Gastrocnemius medialis (tissue), 4 donors: ENCODE measurements at regions of chr7 and their contacts with region 1.

Region 1: DNA sequence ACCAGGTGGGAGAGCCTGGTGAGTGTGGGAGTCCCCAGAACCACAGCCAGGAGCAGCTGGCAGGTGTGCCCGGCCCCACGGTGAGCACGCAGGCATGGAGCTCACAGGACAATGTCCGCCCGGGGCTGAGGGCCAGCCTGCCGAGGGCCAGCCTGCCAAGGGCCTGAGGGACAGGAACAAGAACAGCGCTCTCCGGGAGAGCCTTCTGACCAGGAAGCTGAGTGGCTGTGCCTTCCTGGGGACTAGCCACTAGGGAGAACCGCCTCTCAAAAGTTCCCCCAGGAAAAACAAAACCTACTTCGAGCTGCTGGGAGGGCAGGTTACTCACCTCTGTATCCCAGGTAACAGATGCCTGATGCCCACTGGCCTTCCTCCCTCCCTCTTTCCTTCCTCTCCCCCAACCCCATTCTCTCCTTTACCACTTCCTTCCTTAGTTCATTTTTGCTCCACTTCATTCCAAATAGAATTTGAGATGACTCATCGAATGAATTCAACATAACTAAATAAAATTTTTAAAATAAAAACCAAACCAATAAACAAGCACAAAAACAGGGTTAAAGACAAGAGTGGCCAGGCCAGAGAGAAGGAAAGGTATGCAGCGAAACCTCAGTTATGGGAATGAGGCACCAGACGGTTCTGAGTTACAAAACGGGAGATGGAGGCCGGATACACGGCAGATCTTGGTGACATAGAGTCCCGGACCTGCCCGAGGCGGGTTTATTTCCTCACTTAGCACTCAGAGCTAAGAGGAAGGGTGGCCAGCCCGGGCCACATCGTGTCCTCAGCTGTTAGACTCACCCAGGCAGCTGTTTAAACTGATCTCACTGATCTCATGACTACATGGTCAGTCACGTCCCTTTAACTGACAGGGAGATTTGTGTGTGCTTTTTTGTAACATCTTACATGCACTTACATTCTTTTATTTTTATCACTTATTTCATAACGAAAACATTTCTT is 128.5 kb downstream of the TNS3 start:
- DNase-seq: peak; percentile 91 to 94
- ATAC-seq: peak; percentile 74
- H3K4me3 ChIP-seq: peak overlapping the region; percentile 50 to 61 (median 56)
- H3K27ac ChIP-seq: peak overlapping the region; percentile 91 to 98 (median 94)
- H3K4me1 ChIP-seq: peaks cover 51 to 60% of the 10 kb centered on the region in 2 donors
- H3K27me3 ChIP-seq: no peaks in the 10 kb centered on the region
- CTCF ChIP-seq: peak in 1 of 5 experiments; percentile 13
- POLR2A ChIP-seq: peak; percentile 76 to 87

Region 2: GRCh38 chr7:47474937-47475878 is 21.8 kb after region 1 on chr7:
- in situ Hi-C with region 1: no loop called
- intact Hi-C with region 1: loop called (anchors 1 kb)
- DNase-seq: peak; percentile 97 to 98
- ATAC-seq: peak; percentile 94 to 97
- H3K4me3 ChIP-seq: no peak overlapping the region
- H3K27ac ChIP-seq: peak overlapping the region; percentile 84 to 88 (median 86)
- H3K4me1 ChIP-seq: peaks cover 39 to 45% of the 10 kb centered on the region in 2 donors
- H3K27me3 ChIP-seq: no peaks in the 10 kb centered on the region
- CTCF ChIP-seq: peak in 4 of 5 experiments; percentile 46 to 50 (median 48)
- POLR2A ChIP-seq: peak; percentile 65 to 73